ENCODE measurements at regions of chr17 and their contacts with region 1.

Region 1: GRCh38 chr17:47776330-47777197 is 43.5 kb downstream of the TBX21 start:
- DNase-seq: peak; percentile 66 to 74 (median 70)
- ATAC-seq: peak; percentile 97
- H3K4me3 ChIP-seq: no peak overlapping the region
- H3K27ac ChIP-seq: no peak overlapping the region
- H3K4me1 ChIP-seq: peaks cover 0 to 6% of the 10 kb centered on the region in 2 experiments; a peak in 2 of 5 replicates
- H3K27me3 ChIP-seq: peaks cover 30 to 58% of the 10 kb centered on the region in 2 experiments; a peak in 4 of 5 replicates
- CTCF ChIP-seq: peak; percentile 75 to 84 (median 76)
- EP300 ChIP-seq: no peak
- POLR2A ChIP-seq: no peak
- RAD21 ChIP-seq: peak; percentile 36 to 78

Region 2: GRCh38 chr17:47802341-47803022 is 25.9 kb after region 1 on chr17:
- CTCF ChIA-PET with region 1: interaction called, 6 read pairs
- POLR2A ChIA-PET with region 1: no interaction called
- in situ Hi-C with region 1: no loop called
- intact Hi-C with region 1: loop called (anchors 1 kb)
- DNase-seq: peak; percentile 59 to 68 (median 63)
- ATAC-seq: peak; percentile 95
- H3K4me3 ChIP-seq: no peak overlapping the region
- H3K27ac ChIP-seq: no peak overlapping the region
- H3K4me1 ChIP-seq: peaks cover 0 to 6% of the 10 kb centered on the region in 2 experiments; a peak in 1 of 5 replicates
- H3K27me3 ChIP-seq: peaks cover 0 to 29% of the 10 kb centered on the region in 2 experiments; a peak in 3 of 5 replicates
- CTCF ChIP-seq: peak; percentile 71 to 81 (median 81)
- EP300 ChIP-seq: no peak
- POLR2A ChIP-seq: no peak
- RAD21 ChIP-seq: peak; percentile 40 to 64

Region 3: GRCh38 chr17:47831003-47831933 is 54.7 kb after region 1 on chr17 and contains the starts of genes LRRC46 and MRPL10:
- CTCF ChIA-PET with region 1: no interaction called
- POLR2A ChIA-PET with region 1: no interaction called
- in situ Hi-C with region 1: no loop called
- intact Hi-C with region 1: loop called (anchors 5 kb)
- DNase-seq: peak; percentile 96 to 99 (median 99)
- ATAC-seq: peak; percentile 97
- H3K4me3 ChIP-seq: peak within 1 kb of the TSS; percentile 61
- H3K27ac ChIP-seq: peak within 1 kb of the TSS; percentile 82
- H3K4me1 ChIP-seq: peaks cover 17 to 28% of the 10 kb centered on the region in 2 experiments
- H3K27me3 ChIP-seq: no peaks in the 10 kb centered on the region
- CTCF ChIP-seq: peak; percentile 33 to 45 (median 42); a peak in 5 of 6 replicates
- EP300 ChIP-seq: peak; percentile 37; the same call in 1 of the 2 replicates
- POLR2A ChIP-seq: peak; percentile 97
- RAD21 ChIP-seq: no peak
- polyA plus RNA-seq, gene LRRC46: 0.39 TPM
- polyA plus RNA-seq, gene MRPL10: 27.8 to 47.8 TPM

Region 4: DNA sequence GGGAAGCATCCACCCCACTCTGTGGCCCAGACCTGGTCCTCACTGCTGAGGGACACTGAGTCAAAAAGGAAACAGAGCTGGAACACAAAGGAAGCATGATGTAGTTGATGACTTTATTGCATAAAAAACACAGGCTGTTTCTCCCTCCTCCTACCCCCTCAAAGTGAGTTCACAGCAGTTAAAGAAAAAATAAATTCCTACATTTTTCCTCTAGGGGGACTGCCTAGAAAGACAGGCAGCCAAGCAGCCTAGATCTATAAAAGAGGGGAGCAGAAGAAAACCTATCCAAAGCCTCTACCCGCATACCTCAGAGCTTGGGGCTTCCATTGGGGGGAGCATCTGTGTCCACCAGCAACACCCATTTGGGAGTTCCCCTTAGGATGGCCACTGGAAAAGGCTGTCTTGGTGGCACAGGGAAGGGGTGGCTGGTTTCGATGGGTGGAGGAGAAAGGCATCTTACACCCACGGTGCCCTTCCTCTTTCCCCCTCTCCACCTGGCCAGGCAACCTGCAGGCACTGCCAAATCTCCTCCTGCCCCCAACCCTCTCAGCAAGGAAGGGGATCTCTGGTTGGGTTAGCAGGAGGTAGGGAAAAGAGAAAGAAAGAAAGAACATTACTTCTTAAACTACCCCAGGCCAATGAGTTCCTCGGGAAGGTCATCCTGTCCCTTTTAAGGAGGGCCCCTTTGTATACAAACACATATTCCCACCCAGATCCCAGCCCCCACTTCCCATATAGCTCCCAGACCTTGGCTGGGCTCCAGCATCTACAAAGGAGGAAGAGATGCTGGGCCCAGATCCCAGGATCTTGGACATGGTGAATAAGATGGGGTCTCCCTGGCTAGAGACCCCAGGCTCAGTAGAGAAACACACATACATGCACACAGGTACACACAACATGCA is 68.5 kb after region 1 on chr17:
- CTCF ChIA-PET with region 1: no interaction called
- POLR2A ChIA-PET with region 1: no interaction called
- in situ Hi-C with region 1: no loop called
- intact Hi-C with region 1: no loop called
- DNase-seq: peak in 3 of 4 experiments; percentile 28 to 51 (median 35)
- ATAC-seq: no peak
- H3K4me3 ChIP-seq: no peak overlapping the region
- H3K27ac ChIP-seq: no peak overlapping the region
- H3K4me1 ChIP-seq: peaks cover 41 to 56% of the 10 kb centered on the region in 2 experiments
- H3K27me3 ChIP-seq: no peaks in the 10 kb centered on the region
- CTCF ChIP-seq: peak; percentile 34 to 58 (median 57); a peak in 5 of 6 replicates
- EP300 ChIP-seq: no peak
- POLR2A ChIP-seq: no peak
- RAD21 ChIP-seq: peak in 1 of 2 experiments; percentile 43; a peak in 1 of 4 replicates

Region 5: GRCh38 chr17:47889734-47890529 is 113.4 kb after region 1 on chr17:
- CTCF ChIA-PET with region 1: no interaction called
- POLR2A ChIA-PET with region 1: no interaction called
- in situ Hi-C with region 1: no loop called
- intact Hi-C with region 1: loop called (anchors 5 kb)
- DNase-seq: peak; percentile 72 to 90 (median 74)
- ATAC-seq: peak; percentile 98
- H3K4me3 ChIP-seq: no peak overlapping the region
- H3K27ac ChIP-seq: no peak overlapping the region
- H3K4me1 ChIP-seq: peaks cover 12 to 26% of the 10 kb centered on the region in 2 experiments
- H3K27me3 ChIP-seq: no peaks in the 10 kb centered on the region; a peak in 1 of 5 replicates
- CTCF ChIP-seq: peak; percentile 93 to 97 (median 96)
- EP300 ChIP-seq: no peak
- POLR2A ChIP-seq: no peak
- RAD21 ChIP-seq: peak; percentile 100